Naive thymus-derived CD4-positive, alpha-beta T cell (primary cell): ENCODE measurements at regions of chr5 and their contacts with region 1.

Region 1: DNA sequence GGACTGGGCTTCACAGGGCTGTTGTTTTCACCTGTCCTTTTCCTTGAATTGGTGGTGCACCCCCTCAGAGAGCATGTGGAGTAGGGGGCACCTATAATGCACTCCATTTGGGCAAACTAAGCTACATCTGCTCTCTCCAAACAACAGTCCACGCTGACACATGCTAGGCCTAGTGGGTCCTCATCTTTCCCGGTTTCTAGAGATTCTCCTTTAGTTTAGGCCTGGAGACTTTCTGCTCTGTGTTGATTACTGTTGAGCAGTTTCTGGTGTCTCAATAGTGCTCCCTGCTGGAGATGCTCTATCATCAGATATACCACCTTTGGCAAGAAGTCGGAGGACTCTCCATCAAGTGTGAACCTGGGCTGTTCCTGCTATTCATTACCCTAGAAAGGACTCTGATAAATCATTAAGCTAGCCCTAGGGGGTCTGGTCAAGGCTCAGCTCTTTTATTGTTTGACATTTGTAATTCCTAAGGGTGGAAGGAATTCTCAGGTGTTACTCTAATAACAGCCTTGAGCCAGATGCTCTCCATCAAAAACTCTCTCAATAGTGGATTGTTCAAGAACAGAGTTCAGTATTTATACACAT is 64.0 kb upstream of the FYB1 start:
- DNase-seq: peak; percentile 14 to 83 (median 73)
- ATAC-seq: peak; percentile 99
- H3K4me3 ChIP-seq: no peak overlapping the region
- H3K4me3 Mint-ChIP-seq: peak overlapping the region in 8 of 10 donors; percentile 8 to 66 (median 57)
- H3K27ac ChIP-seq: peak overlapping the region; percentile 3
- H3K27ac Mint-ChIP-seq: peak overlapping the region in 8 of 9 donors; percentile 66 to 98 (median 86)
- H3K4me1 ChIP-seq: peaks cover 4 to 7% of the 10 kb centered on the region in 2 donors
- H3K4me1 Mint-ChIP-seq: peaks cover 18 to 52% (median 46%) of the 10 kb centered on the region in 7 donors
- H3K27me3 ChIP-seq: no peaks in the 10 kb centered on the region
- H3K27me3 Mint-ChIP-seq: peaks cover 0 to 23% (median 8%) of the 10 kb centered on the region in 5 donors

Region 2: GRCh38 chr5:39005566-39006232 is 277.6 kb before region 1 on chr5:
- CTCF ChIA-PET with region 1: no interaction called
- POLR2A ChIA-PET with region 1: no interaction called
- intact Hi-C with region 1: loop called (anchors 1 to 10 kb)
- DNase-seq: peak in 6 of 9 donors; percentile 13 to 49 (median 34)
- ATAC-seq: peak; percentile 81
- H3K4me3 ChIP-seq: no peak overlapping the region
- H3K4me3 Mint-ChIP-seq: peak overlapping the region in 2 of 10 donors; percentile 10 to 27
- H3K27ac ChIP-seq: no peak overlapping the region
- H3K27ac Mint-ChIP-seq: peak overlapping the region in 8 of 9 donors; percentile 46 to 79 (median 68)
- H3K4me1 ChIP-seq: peaks cover 3 to 4% of the 10 kb centered on the region in 2 donors
- H3K4me1 Mint-ChIP-seq: peaks cover 23 to 71% (median 56%) of the 10 kb centered on the region in 7 donors
- H3K27me3 ChIP-seq: no peaks in the 10 kb centered on the region
- H3K27me3 Mint-ChIP-seq: no peaks in the 10 kb centered on the region

Region 3: DNA sequence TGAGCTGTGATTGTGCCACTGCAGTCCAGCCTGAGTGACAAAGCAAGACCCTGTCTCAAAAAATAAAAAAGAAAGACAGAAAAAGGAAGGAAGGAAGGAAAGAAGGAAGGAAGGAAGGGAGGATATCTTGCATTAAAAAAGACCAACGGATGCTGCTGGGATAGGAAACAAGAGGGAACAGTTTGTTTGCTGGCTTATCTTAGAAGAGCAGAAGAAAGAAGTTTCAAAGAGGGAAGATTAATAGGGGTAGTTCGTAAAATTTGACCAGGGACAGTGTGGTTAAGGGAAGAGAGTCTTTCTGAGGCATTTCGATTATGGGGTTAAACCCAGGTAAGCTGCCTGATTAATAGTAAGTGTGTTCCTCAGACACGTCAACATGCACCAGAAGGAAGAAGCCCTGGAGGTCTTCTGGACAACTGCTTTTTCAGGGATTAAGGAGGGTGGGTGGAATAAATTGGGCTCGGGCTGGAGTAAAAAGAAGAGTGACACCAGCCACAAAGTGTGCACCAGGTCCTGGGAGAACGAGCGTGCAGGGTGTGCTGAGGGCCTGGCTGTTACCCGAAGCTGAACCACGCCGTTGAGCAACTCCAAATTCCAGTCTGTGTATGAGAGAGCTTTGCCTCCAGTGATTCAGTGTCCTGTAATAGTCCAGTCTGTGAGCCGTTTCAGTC is 88.7 kb before region 1 on chr5:
- CTCF ChIA-PET with region 1: interaction called, 21 read pairs
- POLR2A ChIA-PET with region 1: interaction called, 7 read pairs
- intact Hi-C with region 1: no loop called
- DNase-seq: peak in 1 of 9 donors; percentile 17
- ATAC-seq: no peak
- H3K4me3 ChIP-seq: peak overlapping the region; percentile 46
- H3K4me3 Mint-ChIP-seq: peak overlapping the region; percentile 75 to 98 (median 88)
- H3K27ac ChIP-seq: peak overlapping the region; percentile 83
- H3K27ac Mint-ChIP-seq: peak overlapping the region; percentile 85 to 98 (median 94)
- H3K4me1 ChIP-seq: peaks cover 67 to 69% of the 10 kb centered on the region in 2 donors
- H3K4me1 Mint-ChIP-seq: peaks cover 52 to 78% (median 70%) of the 10 kb centered on the region in 7 donors
- H3K27me3 ChIP-seq: no peaks in the 10 kb centered on the region
- H3K27me3 Mint-ChIP-seq: no peaks in the 10 kb centered on the region

Region 4: GRCh38 chr5:39209924-39210323 is 73.4 kb before region 1 on chr5:
- CTCF ChIA-PET with region 1: interaction called, 13 read pairs
- POLR2A ChIA-PET with region 1: no interaction called
- intact Hi-C with region 1: no loop called
- DNase-seq: peak in 8 of 9 donors; percentile 77 to 86 (median 81)
- ATAC-seq: peak; percentile 84
- H3K4me3 ChIP-seq: peak overlapping the region; percentile 36
- H3K4me3 Mint-ChIP-seq: peak overlapping the region; percentile 70 to 98 (median 84)
- H3K27ac ChIP-seq: peak overlapping the region; percentile 93
- H3K27ac Mint-ChIP-seq: peak overlapping the region; percentile 93 to 99 (median 98)
- H3K4me1 ChIP-seq: peaks cover 91 to 98% of the 10 kb centered on the region in 2 donors
- H3K4me1 Mint-ChIP-seq: peaks cover 71 to 99% (median 95%) of the 10 kb centered on the region in 7 donors
- H3K27me3 ChIP-seq: no peaks in the 10 kb centered on the region
- H3K27me3 Mint-ChIP-seq: peaks cover 0 to 2% (median 0%) of the 10 kb centered on the region in 5 donors

Region 5: DNA sequence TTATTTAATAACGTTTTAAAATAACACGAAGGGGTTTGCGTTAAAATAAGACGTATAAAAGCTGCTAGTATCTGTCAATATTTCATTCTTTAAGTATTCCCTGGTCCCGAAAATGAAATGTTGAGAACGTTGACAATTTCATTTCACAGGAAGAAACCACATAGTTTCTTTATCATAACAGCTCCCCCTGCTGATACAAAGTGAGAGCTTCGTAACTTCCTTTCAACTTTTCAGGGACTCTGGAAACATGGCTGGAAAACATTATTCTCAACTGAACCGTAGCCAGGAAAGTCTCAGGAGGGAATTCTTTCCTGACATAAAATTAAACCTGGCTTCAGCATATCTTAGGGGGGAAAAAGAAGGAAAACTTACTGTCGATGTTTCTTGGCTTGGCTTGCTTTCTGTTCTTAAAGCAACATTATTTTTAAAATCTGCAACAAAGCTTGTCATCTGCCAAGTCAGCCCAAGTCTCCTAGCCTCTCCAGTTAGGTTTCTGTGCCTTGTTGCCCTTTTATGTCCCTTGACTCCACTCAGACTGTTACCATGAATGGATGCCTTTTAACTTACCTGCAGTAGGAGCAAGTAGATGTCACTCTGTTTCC is 264.3 kb after region 1 on chr5:
- CTCF ChIA-PET with region 1: interaction called, 6 read pairs
- POLR2A ChIA-PET with region 1: no interaction called
- intact Hi-C with region 1: loop called in 1 of 2 experiments (anchors 1 kb)
- DNase-seq: peak in 7 of 9 donors; percentile 14 to 49 (median 36)
- ATAC-seq: peak; percentile 50
- H3K4me3 ChIP-seq: no peak overlapping the region
- H3K4me3 Mint-ChIP-seq: peak overlapping the region in 8 of 10 donors; percentile 16 to 67 (median 50)
- H3K27ac ChIP-seq: no peak overlapping the region
- H3K27ac Mint-ChIP-seq: peak overlapping the region in 1 of 9 donors; percentile 55
- H3K4me1 ChIP-seq: no peaks in the 10 kb centered on the region
- H3K4me1 Mint-ChIP-seq: peaks cover 0 to 8% (median 5%) of the 10 kb centered on the region in 7 donors
- H3K27me3 ChIP-seq: no peaks in the 10 kb centered on the region
- H3K27me3 Mint-ChIP-seq: peaks cover 0 to 5% (median 0%) of the 10 kb centered on the region in 5 donors